MCF 10A (cell line): ENCODE measurements at regions of chr15 and their contacts with region 1.

Region 1: GRCh38 chr15:52018693-52019387 is at the start of gene MAPK6:
- DNase-seq: peak; percentile 90
- H3K4me3 Mint-ChIP-seq: peak within 1 kb of the TSS; percentile 95
- H3K27ac Mint-ChIP-seq: peak within 1 kb of the TSS; percentile 99
- H3K4me1 Mint-ChIP-seq: peaks cover 17% of the 10 kb centered on the region
- H3K27me3 Mint-ChIP-seq: no peaks in the 10 kb centered on the region
- CTCF ChIP-seq: no peak
- total RNA-seq, gene MAPK6: 106 and 114 TPM in 2 replicates

Region 2: GRCh38 chr15:51335538-51336321 is 683.1 kb before region 1 on chr15:
- CTCF ChIA-PET with region 1: no interaction called
- POLR2A ChIA-PET with region 1: no interaction called
- intact Hi-C with region 1: no loop called
- DNase-seq: no peak
- H3K4me3 Mint-ChIP-seq: no peak overlapping the region
- H3K27ac Mint-ChIP-seq: no peak overlapping the region
- H3K4me1 Mint-ChIP-seq: no peaks in the 10 kb centered on the region
- H3K27me3 Mint-ChIP-seq: no peaks in the 10 kb centered on the region
- CTCF ChIP-seq: no peak

Region 3: DNA sequence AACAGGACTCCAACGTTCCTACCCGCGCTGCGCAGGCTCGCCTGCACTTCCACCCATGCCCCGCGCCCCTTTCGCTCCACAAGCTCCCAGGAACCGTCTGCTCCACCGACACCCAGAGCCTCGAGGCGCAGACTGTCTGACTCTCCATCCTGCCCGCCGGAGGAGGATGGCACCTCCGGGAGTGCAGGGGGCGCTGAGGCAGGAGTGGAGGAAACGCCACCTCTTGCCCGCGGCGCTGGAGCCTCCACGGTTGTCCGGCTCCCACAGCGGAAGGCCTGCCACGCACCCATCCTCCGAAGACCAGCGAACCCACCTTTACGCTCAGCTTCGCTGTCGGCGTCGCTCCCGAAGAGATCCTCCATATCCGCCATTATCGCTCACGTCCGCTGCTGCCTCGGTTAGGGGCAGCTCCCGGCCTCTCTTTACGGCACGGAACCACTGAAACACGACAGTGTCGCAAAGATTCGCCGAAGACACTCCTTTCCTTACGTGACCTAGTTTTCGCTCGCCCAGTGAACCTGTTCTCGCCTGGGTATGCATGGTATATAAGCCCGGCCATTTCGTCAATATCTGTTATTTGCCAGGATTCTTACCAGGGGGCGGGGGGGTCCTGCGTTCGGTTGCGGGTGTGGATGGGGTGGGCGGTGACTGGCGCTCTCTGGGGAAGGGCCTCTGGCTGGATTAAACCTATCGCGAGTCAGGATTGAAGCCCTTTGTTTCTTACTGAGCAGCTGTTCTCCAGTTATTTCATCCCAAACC is 47.3 kb before region 1 on chr15 and contains the start of gene LEO1:
- CTCF ChIA-PET with region 1: interaction called, 4 read pairs
- POLR2A ChIA-PET with region 1: interaction called, 97 read pairs
- intact Hi-C with region 1: loop called (anchors 2 kb)
- DNase-seq: peak; percentile 95
- H3K4me3 Mint-ChIP-seq: peak within 1 kb of the TSS; percentile 97
- H3K27ac Mint-ChIP-seq: peak within 1 kb of the TSS; percentile 94
- H3K4me1 Mint-ChIP-seq: peaks cover 12% of the 10 kb centered on the region
- H3K27me3 Mint-ChIP-seq: no peaks in the 10 kb centered on the region
- CTCF ChIP-seq: peak; percentile 31
- total RNA-seq, gene LEO1: 24.2 and 29.3 TPM in 2 replicates

Region 4: GRCh38 chr15:51992976-51993375 is 25.9 kb before region 1 on chr15:
- CTCF ChIA-PET with region 1: interaction called, 3 read pairs
- POLR2A ChIA-PET with region 1: interaction called, 94 read pairs
- intact Hi-C with region 1: loop called (anchors 2 kb)
- DNase-seq: peak; percentile 71
- H3K4me3 Mint-ChIP-seq: no peak overlapping the region
- H3K27ac Mint-ChIP-seq: no peak overlapping the region
- H3K4me1 Mint-ChIP-seq: peaks cover 28% of the 10 kb centered on the region
- H3K27me3 Mint-ChIP-seq: no peaks in the 10 kb centered on the region
- CTCF ChIP-seq: no peak

Region 5: GRCh38 chr15:52031566-52031965 is 12.7 kb after region 1 on chr15:
- CTCF ChIA-PET with region 1: no interaction called
- POLR2A ChIA-PET with region 1: interaction called, 86 read pairs
- intact Hi-C with region 1: no loop called
- DNase-seq: peak; percentile 95
- H3K4me3 Mint-ChIP-seq: no peak overlapping the region
- H3K27ac Mint-ChIP-seq: peak overlapping the region; percentile 31
- H3K4me1 Mint-ChIP-seq: peaks cover 16% of the 10 kb centered on the region
- H3K27me3 Mint-ChIP-seq: no peaks in the 10 kb centered on the region
- CTCF ChIP-seq: no peak

Region 6: GRCh38 chr15:52050416-52050815 is 31.6 kb after region 1 on chr15:
- CTCF ChIA-PET with region 1: no interaction called
- POLR2A ChIA-PET with region 1: interaction called, 15 read pairs
- intact Hi-C with region 1: no loop called
- DNase-seq: peak; percentile 28
- H3K4me3 Mint-ChIP-seq: no peak overlapping the region
- H3K27ac Mint-ChIP-seq: no peak overlapping the region
- H3K4me1 Mint-ChIP-seq: peaks cover 5% of the 10 kb centered on the region
- H3K27me3 Mint-ChIP-seq: no peaks in the 10 kb centered on the region
- CTCF ChIP-seq: no peak

Region 7: DNA sequence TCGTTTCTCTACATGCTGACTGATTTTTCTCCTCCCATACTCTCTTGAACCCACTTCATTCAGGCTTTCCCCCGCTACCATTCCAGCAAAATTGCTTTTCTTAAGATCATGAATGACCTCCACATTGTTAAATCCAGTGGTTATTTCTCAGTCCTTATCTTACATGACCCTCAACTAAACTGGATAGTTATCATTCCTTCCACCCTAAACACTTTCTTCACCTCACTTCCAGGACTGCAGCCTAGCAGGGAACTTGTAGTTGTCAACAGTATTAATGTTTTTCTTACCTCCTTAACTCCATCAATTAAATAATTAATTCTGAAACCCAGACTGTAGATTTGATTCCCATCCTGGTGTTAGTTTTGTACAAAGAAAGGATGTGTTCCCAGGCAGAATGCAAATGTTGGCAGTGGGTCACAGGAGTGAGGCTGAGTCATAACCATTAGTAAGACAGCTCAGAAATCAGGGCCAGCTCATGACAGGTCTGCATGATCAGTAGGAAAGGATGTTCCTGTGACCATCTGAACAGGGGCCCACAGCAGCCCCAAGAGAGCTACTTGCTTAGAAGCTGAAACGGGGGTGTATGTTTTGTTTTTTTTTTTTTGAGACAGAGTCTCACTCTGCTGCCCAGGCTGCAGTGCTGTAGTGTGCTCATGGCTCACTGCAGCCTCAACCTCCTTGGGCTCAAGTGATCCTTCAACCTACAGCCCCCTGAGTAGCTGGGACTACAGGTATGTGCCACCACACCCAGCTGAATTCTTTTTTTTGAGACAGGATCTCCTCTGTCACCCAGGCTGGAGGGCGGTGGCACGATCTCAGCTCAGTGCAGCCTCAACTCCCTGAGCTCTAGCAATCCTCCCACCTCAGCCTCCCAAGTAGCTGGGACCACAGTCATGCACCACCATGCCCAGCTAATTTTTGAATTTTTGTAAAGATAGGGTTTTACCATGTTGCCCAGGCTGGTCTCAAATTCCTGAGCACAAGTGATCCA is 84.7 kb after region 1 on chr15:
- CTCF ChIA-PET with region 1: no interaction called
- POLR2A ChIA-PET with region 1: interaction called, 102 read pairs
- intact Hi-C with region 1: no loop called
- DNase-seq: peak; percentile 95
- H3K4me3 Mint-ChIP-seq: peak overlapping the region; percentile 20
- H3K27ac Mint-ChIP-seq: peak overlapping the region; percentile 92
- H3K4me1 Mint-ChIP-seq: peaks cover 36% of the 10 kb centered on the region
- H3K27me3 Mint-ChIP-seq: no peaks in the 10 kb centered on the region
- CTCF ChIP-seq: no peak

Region 8: DNA sequence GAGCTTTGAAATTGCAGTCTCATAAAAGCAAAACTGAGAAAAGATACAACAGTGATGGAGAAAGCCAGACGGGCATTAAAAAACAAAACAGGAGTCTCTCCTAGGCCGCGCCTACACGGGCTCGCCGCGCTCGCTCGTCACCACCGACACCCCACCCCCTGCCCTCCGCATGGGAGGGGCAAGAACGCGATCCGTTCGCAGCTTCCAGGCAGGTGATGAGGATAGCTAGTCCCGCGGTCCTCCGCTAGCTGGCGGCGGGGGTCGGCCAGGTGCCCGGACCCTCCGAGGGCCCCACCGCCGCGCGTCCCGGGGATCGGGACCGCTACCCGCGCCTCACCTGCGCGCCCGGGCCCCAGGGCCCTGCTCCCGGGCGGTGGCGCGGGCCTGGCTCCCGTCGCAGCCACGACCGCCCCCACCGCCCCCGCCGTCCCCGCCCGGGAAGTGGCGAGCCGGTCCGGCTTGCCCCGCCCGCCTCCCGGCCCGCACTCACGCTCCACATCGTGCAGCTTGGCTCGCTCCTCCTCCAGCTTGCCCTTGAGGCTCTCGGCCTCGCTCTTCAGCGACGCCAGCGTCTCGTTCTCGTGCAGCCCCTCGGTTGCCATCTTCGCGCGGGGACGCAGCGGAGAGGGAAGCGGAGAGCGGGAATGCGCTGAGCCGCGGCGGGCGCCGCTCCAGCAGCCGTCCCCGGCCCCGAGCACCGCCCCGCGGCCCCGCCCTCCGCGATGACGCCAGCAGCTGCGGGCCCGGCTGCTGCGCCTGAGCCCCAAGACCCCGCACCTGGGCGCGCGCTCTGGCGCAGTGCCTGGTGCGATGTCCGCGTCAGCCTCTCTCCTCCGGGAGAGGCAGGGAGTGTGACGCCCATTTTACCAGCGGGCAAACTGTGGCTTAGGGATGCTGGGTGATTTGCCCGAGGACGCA is 160.7 kb after region 1 on chr15:
- CTCF ChIA-PET with region 1: no interaction called
- POLR2A ChIA-PET with region 1: interaction called, 22 read pairs
- intact Hi-C with region 1: loop called (anchors 5 kb)
- DNase-seq: peak; percentile 87
- H3K4me3 Mint-ChIP-seq: peak overlapping the region; percentile 81
- H3K27ac Mint-ChIP-seq: peak overlapping the region; percentile 93
- H3K4me1 Mint-ChIP-seq: peaks cover 10% of the 10 kb centered on the region
- H3K27me3 Mint-ChIP-seq: no peaks in the 10 kb centered on the region
- CTCF ChIP-seq: peak; percentile 21